ENCODE measurements at regions of chr11 and their contacts with region 1.

Region 1: DNA sequence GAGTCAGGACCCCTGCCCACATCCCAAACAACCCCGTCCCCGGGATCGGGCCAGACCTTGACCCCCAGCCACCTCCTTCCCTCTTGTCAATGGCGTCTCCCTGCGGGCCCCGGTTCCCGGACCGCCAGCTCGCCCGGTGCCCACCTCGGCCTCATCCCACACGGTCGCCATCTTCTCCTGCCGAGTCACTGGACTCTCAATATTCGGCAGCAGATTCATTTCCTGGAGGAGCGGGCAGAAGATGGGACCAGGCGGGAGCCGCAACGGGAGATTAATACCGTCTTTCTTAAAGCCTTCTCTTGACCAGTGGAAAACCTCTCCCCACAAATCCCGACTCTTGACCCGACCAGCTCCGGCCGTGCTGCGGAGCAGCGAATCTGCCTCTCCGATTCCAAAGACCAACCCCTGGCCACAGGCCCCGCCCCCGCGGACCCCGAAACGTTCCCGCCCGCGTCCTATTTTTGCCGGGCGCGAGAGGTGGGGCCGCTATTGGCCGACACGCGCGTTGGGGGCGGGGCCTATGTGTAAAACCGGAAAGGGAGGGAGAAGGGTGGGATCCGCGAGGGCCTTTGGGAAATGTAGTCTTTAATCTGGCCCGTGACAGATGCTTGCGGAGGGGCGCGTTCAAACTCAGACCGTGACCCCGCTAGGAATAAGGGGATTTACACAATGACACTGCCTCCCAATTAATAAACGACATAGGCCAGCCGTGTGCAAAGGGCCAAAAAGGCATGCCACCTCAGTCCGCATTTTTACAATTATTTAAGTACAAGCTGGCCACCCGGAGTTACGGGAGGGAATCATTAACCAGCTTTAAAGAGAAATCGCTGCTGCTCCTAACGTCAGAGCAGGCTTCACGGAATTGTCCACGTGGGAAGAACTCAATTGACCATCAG is at the start of gene PSMC3:
- DNase-seq: peak; percentile 99
- H3K4me3 Mint-ChIP-seq: peak within 1 kb of the TSS; percentile 98
- H3K27ac Mint-ChIP-seq: peak within 1 kb of the TSS; percentile 99
- H3K4me1 Mint-ChIP-seq: peaks cover 30% of the 10 kb centered on the region
- H3K27me3 Mint-ChIP-seq: no peaks in the 10 kb centered on the region
- total RNA-seq, gene PSMC3: 153 to 162 TPM

Region 2: GRCh38 chr11:47411884-47412746 is 14.2 kb before region 1 on chr11:
- CTCF ChIA-PET with region 1: interaction called, 47 read pairs
- POLR2A ChIA-PET with region 1: no interaction called
- DNase-seq: peak; percentile 66
- H3K4me3 Mint-ChIP-seq: no peak overlapping the region
- H3K27ac Mint-ChIP-seq: no peak overlapping the region
- H3K4me1 Mint-ChIP-seq: peaks cover 13% of the 10 kb centered on the region
- H3K27me3 Mint-ChIP-seq: no peaks in the 10 kb centered on the region